CD14-positive monocyte (primary cell): ENCODE measurements at regions of chr13 and their contacts with region 1.

Region 1: GRCh38 chr13:20495082-20496023 is 30.3 kb downstream of the CRYL1 start:
- DNase-seq: peak; percentile 57 to 82 (median 69)
- H3K4me3 ChIP-seq: peak overlapping the region; percentile 22 to 62 (median 34)
- H3K4me3 Mint-ChIP-seq: peak overlapping the region; percentile 56 to 65
- H3K27ac ChIP-seq: no peak overlapping the region
- H3K27ac Mint-ChIP-seq: peak overlapping the region in 4 of 7 donors; percentile 31 to 47 (median 39)
- H3K4me1 ChIP-seq: peaks cover 9 to 10% of the 10 kb centered on the region in 2 donors
- H3K4me1 Mint-ChIP-seq: peaks cover 11% of the 10 kb centered on the region
- H3K27me3 ChIP-seq: no peaks in the 10 kb centered on the region
- H3K27me3 Mint-ChIP-seq: no peaks in the 10 kb centered on the region
- CTCF ChIP-seq: peak; percentile 99

Region 2: DNA sequence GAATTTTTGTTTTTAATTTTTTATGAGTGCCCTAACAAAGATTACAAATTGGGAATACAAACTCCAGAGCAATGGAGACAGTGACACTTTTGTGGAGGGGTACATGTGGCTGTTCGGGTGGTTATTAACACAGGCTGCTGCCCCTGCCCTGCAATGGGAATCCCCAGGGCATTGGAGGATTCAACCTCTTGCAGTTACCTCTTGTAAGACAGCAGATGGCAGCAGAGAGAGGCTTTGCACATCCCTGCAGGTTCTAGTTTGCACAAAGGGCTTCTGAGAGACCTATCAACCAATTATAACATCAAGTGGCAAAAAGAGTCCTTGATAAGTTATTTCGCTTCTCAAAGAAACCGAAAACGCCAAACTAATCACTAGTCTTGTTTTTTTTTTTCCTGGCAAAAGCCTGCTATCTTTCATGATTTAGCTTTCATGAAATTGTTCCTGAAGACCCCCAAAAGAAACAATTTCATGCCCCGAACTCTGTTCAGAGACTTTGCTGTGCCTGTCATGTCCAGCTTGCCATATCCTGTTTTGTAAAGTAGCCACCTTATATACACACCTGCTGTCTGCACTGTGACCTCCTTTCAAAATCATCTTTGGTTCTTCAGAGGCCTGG is 313.0 kb before region 1 on chr13:
- intact Hi-C with region 1: loop called in 1 of 2 experiments (anchors 5 kb)
- DNase-seq: peak; percentile 57 to 86 (median 66)
- H3K4me3 ChIP-seq: no peak overlapping the region
- H3K4me3 Mint-ChIP-seq: peak overlapping the region in 1 of 2 donors; percentile 30
- H3K27ac ChIP-seq: no peak overlapping the region
- H3K27ac Mint-ChIP-seq: no peak overlapping the region
- H3K4me1 ChIP-seq: no peaks in the 10 kb centered on the region
- H3K4me1 Mint-ChIP-seq: peaks cover 10% of the 10 kb centered on the region
- H3K27me3 ChIP-seq: peaks cover 17 to 28% of the 10 kb centered on the region in 2 donors
- H3K27me3 Mint-ChIP-seq: peaks cover 28 to 39% (median 33%) of the 10 kb centered on the region in 3 donors
- CTCF ChIP-seq: peak; percentile 84

Region 3: GRCh38 chr13:20696073-20696472 is 200.7 kb after region 1 on chr13:
- intact Hi-C with region 1: loop called in 1 of 2 experiments (anchors 10 kb)
- DNase-seq: no peak
- H3K4me3 ChIP-seq: no peak overlapping the region
- H3K4me3 Mint-ChIP-seq: no peak overlapping the region
- H3K27ac ChIP-seq: no peak overlapping the region
- H3K27ac Mint-ChIP-seq: no peak overlapping the region
- H3K4me1 ChIP-seq: no peaks in the 10 kb centered on the region
- H3K4me1 Mint-ChIP-seq: peaks cover 7% of the 10 kb centered on the region
- H3K27me3 ChIP-seq: peaks cover 0 to 2% of the 10 kb centered on the region in 2 donors
- H3K27me3 Mint-ChIP-seq: peaks cover 4 to 12% (median 10%) of the 10 kb centered on the region in 3 donors
- CTCF ChIP-seq: no peak

Region 4: GRCh38 chr13:20828539-20829364 is 333.4 kb after region 1 on chr13:
- intact Hi-C with region 1: loop called (anchors 1 to 5 kb)
- DNase-seq: peak; percentile 38 to 60 (median 53)
- H3K4me3 ChIP-seq: peak overlapping the region in 2 of 3 experiments; percentile 30 to 45
- H3K4me3 Mint-ChIP-seq: peak overlapping the region in 1 of 2 donors; percentile 73
- H3K27ac ChIP-seq: no peak overlapping the region
- H3K27ac Mint-ChIP-seq: peak overlapping the region in 3 of 7 donors; percentile 40 to 50 (median 41)
- H3K4me1 ChIP-seq: no peaks in the 10 kb centered on the region
- H3K4me1 Mint-ChIP-seq: peaks cover 6% of the 10 kb centered on the region
- H3K27me3 ChIP-seq: no peaks in the 10 kb centered on the region
- H3K27me3 Mint-ChIP-seq: no peaks in the 10 kb centered on the region
- CTCF ChIP-seq: peak; percentile 81

Region 5: DNA sequence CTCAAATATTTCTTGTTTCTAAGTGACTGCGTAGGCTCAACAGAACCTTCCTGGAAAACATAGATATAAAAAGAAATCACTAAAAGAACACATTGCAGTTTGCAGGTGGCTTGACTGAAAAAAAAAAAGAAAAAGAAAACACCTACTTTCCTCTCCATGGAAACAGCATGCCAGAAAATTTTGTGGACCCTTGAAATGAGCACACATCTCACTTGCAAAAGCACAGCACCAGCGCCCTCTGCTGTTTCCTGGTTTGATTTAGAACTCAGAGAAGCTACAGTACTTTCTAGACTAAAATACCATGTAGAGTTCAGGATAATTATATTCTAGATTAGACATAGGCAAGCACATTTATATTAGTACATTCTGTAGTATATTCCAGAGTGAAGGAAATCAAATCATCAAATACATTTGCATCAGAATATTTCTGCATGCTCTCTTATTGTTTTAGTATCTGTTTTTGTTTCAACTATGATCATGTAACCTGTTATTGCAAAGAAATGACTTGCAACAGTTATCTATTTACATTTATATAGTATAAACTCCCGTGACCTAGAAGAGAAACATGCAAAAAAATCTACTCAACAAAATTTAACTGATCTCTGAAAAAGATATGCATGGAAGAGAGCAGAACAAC is 429.5 kb after region 1 on chr13:
- intact Hi-C with region 1: loop called (anchors 5 to 10 kb)
- DNase-seq: peak; percentile 22 to 49 (median 47)
- H3K4me3 ChIP-seq: no peak overlapping the region
- H3K4me3 Mint-ChIP-seq: no peak overlapping the region
- H3K27ac ChIP-seq: no peak overlapping the region
- H3K27ac Mint-ChIP-seq: no peak overlapping the region
- H3K4me1 ChIP-seq: no peaks in the 10 kb centered on the region
- H3K4me1 Mint-ChIP-seq: no peaks in the 10 kb centered on the region
- H3K27me3 ChIP-seq: no peaks in the 10 kb centered on the region
- H3K27me3 Mint-ChIP-seq: peaks cover 0 to 7% (median 4%) of the 10 kb centered on the region in 3 donors
- CTCF ChIP-seq: peak; percentile 86